SK-N-SH (cell line): ENCODE measurements at regions of chr10 and their contacts with region 1.

Region 1: DNA sequence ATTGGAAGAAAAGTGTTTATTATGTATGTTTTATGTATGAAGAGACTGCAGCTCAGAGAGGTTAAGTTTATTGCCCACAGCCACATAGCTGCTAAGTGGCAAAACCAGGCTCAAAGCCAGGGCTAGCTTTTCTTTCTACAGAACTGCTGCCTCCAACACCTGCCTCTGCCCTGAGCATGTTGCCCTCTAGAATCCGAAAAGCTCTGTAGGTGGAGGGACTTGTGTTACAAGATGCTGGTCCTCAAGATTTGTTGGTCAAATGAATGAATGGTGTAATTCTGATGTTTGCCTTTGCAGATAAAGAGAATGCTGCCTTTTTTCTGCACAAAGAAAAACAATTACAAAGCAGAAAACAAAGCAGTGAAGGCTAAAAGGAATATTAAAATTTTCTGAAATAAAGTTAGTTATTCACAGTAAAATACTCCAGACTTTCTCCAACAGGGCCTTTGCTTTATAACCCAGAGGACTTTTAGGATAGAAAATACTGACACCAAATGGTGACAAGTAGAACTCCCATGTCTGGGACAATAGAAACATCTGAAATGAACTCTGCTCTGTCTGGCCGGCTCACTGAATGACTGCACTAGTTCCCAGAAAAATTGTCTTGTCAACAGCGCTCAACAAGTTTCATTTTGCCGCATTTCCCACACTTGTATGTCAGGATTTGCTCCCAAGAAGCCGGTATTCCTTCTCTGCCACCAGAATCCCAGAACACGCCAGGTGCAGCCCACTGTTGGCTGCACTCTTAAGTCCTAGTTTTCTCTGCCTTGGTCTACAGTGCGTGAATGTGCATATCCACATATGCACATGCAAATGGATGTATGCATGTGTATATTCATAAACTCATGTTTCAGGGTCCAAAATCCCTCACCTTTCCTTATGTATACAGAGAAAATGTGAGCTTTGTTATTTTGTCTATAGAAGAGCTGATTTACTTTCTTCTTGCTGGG is 11.0 kb upstream of the DNTT start:
- DNase-seq: peak; percentile 36
- H3K4me3 ChIP-seq: peak overlapping the region in 1 of 2 experiments; percentile 5; a peak in 1 of 4 replicates
- H3K27ac ChIP-seq: no peak overlapping the region
- H3K4me1 ChIP-seq: no peaks in the 10 kb centered on the region; a peak in 1 of 4 replicates
- H3K27me3 ChIP-seq: no peaks in the 10 kb centered on the region
- CTCF ChIP-seq: peak; percentile 64
- EP300 ChIP-seq: no peak
- RAD21 ChIP-seq: peak; percentile 83

Region 2: GRCh38 chr10:96306516-96306915 is 13.3 kb after region 1 on chr10:
- CTCF ChIA-PET with region 1: interaction called, 11 read pairs
- POLR2A ChIA-PET with region 1: no interaction called
- DNase-seq: no peak
- H3K4me3 ChIP-seq: no peak overlapping the region
- H3K27ac ChIP-seq: no peak overlapping the region
- H3K4me1 ChIP-seq: no peaks in the 10 kb centered on the region
- H3K27me3 ChIP-seq: no peaks in the 10 kb centered on the region
- CTCF ChIP-seq: no peak
- EP300 ChIP-seq: no peak
- RAD21 ChIP-seq: no peak